ENCODE measurements at regions of chr14 and their contacts with region 1.

Region 1: DNA sequence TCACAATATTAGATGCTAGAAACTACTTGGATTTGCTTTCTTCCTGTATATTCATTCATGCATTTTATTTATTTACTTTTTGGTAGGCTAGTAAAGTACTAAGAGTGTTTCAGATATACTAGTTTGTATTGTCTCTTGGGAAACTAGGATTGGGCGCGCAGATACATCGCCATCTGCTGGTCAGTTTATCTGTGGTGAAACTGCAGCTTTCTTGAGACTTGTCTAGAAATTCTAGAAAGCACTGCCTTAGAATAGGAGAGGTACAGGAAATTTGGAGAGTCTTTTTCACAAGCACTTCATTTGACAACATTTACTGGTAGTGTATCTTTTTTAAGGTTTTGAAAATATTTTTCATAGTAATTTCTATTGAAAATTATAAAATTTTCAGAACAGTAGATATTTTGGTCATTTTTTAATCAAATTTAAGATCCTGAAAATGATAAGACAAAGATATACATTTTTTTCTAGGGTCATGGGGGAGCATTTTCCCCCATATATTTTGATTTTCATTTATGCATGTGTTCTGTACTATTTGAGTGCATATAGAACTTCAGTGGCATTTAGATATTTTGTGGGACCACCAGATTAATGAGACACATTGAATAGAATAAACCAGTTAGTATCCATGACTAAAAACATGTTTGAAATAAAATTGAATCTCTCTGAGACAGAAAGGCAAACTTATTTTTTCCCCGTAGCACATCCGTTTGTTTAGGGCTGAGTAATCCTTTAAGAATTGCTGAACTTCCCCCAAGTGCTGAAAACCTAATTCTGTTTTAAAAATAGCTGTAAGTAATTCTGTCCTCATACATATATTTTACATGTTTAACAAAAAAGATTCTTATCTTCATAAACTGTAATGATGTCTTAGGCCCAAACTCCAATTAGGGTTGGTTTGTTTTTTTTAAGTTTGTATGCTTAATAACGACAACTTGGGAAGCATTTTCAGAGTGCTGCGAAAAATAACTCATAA is 44.5 kb downstream of the SLC38A6 start:
- DNase-seq: peak in 7 of 9 donors; percentile 29 to 55 (median 43)
- ATAC-seq: peak; percentile 63
- H3K4me3 ChIP-seq: no peak overlapping the region
- H3K4me3 Mint-ChIP-seq: no peak overlapping the region
- H3K27ac ChIP-seq: no peak overlapping the region
- H3K27ac Mint-ChIP-seq: no peak overlapping the region
- H3K4me1 ChIP-seq: no peaks in the 10 kb centered on the region
- H3K4me1 Mint-ChIP-seq: no peaks in the 10 kb centered on the region
- H3K27me3 ChIP-seq: no peaks in the 10 kb centered on the region
- H3K27me3 Mint-ChIP-seq: no peaks in the 10 kb centered on the region

Region 2: DNA sequence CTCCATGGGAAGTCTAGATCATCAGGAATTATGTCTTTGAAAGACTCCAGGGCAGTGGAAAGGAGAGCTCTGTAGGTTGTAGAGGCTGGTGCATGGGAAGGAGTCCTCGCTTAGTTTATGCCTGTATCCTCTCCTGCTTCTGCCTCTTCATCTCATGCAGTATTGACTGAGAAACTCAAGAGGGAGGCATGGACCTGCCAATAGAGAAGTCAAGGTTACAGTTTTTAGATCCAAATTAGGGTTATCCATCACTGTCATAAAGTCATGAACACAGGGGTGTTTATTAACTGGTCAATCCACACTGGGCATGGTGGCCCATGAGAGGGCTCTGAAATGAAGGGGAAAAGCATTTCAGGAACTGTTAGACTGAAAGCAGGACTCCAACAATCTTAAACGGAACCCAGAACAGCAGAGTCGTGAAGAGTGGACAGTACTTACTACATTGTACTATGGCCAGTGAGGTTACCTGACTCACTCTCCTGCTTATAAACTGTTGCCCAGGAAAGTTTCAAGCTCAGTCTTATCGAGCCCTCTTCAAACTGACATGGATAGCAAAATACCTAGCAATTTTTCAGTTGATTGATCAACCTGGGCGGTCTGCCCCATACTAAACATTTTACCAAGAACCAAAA is 830.2 kb before region 1 on chr14:
- CTCF ChIA-PET with region 1: no interaction called
- POLR2A ChIA-PET with region 1: no interaction called
- intact Hi-C with region 1: loop called in 1 of 2 experiments (anchors 10 kb)
- DNase-seq: peak in 4 of 9 donors; percentile 13 to 31 (median 22)
- ATAC-seq: peak; percentile 60
- H3K4me3 ChIP-seq: no peak overlapping the region
- H3K4me3 Mint-ChIP-seq: no peak overlapping the region
- H3K27ac ChIP-seq: no peak overlapping the region
- H3K27ac Mint-ChIP-seq: no peak overlapping the region
- H3K4me1 ChIP-seq: no peaks in the 10 kb centered on the region
- H3K4me1 Mint-ChIP-seq: peaks cover 0 to 5% (median 0%) of the 10 kb centered on the region in 7 donors
- H3K27me3 ChIP-seq: no peaks in the 10 kb centered on the region
- H3K27me3 Mint-ChIP-seq: peaks cover 3 to 20% (median 10%) of the 10 kb centered on the region in 5 donors

Region 3: DNA sequence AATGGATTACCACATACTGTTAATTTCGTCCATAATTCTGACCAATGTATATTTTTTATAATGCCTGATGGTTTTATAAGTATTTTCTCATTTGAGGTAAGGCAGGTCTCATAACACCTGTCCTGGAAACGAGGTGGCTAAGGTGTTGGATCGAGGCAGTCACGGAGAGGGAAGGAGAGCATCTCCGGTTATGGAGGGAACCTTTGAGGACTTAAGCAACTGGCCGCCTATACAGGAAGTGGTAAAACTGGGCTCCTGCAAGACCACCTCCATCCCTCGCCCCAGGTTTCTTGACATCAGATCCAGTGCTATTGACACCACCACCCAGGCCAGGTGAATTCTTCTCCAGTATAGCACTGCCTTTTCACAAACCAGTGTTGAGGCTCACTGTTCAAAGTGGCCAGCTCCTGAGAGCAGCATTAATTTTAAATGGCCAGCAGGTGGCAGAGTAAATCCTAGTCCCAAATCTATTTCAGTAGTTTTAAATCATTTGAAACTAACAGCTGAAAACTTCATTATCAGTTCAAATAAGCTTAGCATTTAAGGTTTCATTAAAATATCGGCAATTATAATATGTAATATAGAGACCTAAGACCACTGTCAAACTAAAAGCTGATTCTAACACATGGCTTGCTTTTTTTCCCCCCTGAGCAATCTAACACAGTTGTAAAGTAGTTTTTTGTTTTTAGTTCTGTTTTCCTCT is 675.7 kb before region 1 on chr14:
- CTCF ChIA-PET with region 1: no interaction called
- POLR2A ChIA-PET with region 1: no interaction called
- intact Hi-C with region 1: loop called in 1 of 2 experiments (anchors 1 kb)
- DNase-seq: peak in 6 of 9 donors; percentile 2 to 37 (median 24)
- ATAC-seq: peak; percentile 54
- H3K4me3 ChIP-seq: no peak overlapping the region
- H3K4me3 Mint-ChIP-seq: no peak overlapping the region
- H3K27ac ChIP-seq: no peak overlapping the region
- H3K27ac Mint-ChIP-seq: no peak overlapping the region
- H3K4me1 ChIP-seq: no peaks in the 10 kb centered on the region
- H3K4me1 Mint-ChIP-seq: peaks cover 0 to 12% (median 3%) of the 10 kb centered on the region in 7 donors
- H3K27me3 ChIP-seq: peaks cover 0 to 3% of the 10 kb centered on the region in 2 donors
- H3K27me3 Mint-ChIP-seq: peaks cover 0 to 27% (median 12%) of the 10 kb centered on the region in 5 donors

Region 4: DNA sequence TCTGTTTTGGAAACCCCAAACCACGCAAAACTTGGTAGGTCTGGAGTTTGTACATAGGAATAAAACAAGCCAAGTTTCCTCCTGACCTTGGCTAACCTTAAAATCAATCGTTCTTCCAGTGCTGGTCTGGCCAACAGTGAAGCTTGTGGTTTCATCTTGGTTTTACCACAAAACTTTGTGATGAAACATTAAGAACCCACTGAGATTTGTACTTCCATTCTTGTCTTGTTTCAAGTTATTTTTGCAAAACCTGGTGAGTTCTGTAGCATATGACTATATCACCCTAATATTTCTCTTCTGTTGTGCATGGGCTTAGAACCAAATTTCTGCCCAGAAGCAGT is 402.6 kb before region 1 on chr14:
- CTCF ChIA-PET with region 1: interaction called, 21 read pairs
- POLR2A ChIA-PET with region 1: no interaction called
- intact Hi-C with region 1: loop called (anchors 1 kb)
- DNase-seq: no peak
- ATAC-seq: no peak
- H3K4me3 ChIP-seq: no peak overlapping the region
- H3K4me3 Mint-ChIP-seq: no peak overlapping the region
- H3K27ac ChIP-seq: no peak overlapping the region
- H3K27ac Mint-ChIP-seq: no peak overlapping the region
- H3K4me1 ChIP-seq: no peaks in the 10 kb centered on the region
- H3K4me1 Mint-ChIP-seq: peaks cover 0 to 2% (median 0%) of the 10 kb centered on the region in 7 donors
- H3K27me3 ChIP-seq: no peaks in the 10 kb centered on the region
- H3K27me3 Mint-ChIP-seq: peaks cover 25 to 47% (median 34%) of the 10 kb centered on the region in 5 donors

Region 5: DNA sequence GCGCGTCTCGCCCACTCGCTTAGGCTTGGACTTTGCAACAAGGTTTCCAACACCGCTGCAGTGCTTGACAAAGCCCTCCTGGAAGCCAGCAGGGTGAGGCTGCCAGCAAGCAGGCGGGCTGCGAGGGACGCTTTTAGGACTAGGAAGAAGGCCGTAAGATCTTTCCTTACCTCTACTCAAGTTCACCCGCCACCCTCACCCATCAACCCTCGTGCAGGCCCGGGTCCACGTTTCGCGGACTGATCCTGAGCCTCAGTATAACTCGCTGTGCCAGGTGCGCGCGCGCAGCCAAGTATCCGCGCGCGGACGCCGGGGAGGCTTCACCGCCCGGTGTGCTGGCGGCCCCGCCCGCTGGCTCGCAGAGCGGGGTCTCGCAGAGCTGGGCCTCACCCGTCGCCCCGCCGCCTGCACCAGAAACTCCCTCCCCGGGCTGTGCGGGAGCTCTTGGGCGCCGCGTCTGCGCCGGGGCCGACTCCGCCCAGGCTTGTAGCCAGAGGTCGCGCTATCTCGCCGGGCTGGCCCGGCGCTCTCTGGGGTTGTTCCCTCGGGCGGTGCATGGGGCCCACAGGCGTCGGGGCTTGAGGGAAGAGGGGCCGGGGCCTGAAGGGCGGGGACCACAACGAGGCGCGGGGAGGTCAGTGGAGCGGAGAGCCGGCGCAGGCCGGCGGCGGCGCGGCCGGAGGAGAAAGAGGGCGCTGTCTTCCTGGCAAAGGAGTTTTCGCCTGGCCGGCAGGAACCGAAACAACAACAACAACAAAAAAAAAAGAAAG is 368.7 kb before region 1 on chr14:
- CTCF ChIA-PET with region 1: interaction called, 3 read pairs
- POLR2A ChIA-PET with region 1: no interaction called
- intact Hi-C with region 1: loop called in 1 of 2 experiments (anchors 10 kb)
- DNase-seq: peak in 1 of 9 donors; percentile 54
- ATAC-seq: peak; percentile 49
- H3K4me3 ChIP-seq: peak overlapping the region; percentile 30
- H3K4me3 Mint-ChIP-seq: peak overlapping the region; percentile 66 to 84 (median 79)
- H3K27ac ChIP-seq: no peak overlapping the region
- H3K27ac Mint-ChIP-seq: no peak overlapping the region
- H3K4me1 ChIP-seq: peaks cover 12 to 17% of the 10 kb centered on the region in 2 donors
- H3K4me1 Mint-ChIP-seq: peaks cover 13 to 58% (median 50%) of the 10 kb centered on the region in 7 donors
- H3K27me3 ChIP-seq: peaks cover 14 to 38% of the 10 kb centered on the region in 2 donors
- H3K27me3 Mint-ChIP-seq: peaks cover 75 to 90% (median 82%) of the 10 kb centered on the region in 5 donors

Region 6: DNA sequence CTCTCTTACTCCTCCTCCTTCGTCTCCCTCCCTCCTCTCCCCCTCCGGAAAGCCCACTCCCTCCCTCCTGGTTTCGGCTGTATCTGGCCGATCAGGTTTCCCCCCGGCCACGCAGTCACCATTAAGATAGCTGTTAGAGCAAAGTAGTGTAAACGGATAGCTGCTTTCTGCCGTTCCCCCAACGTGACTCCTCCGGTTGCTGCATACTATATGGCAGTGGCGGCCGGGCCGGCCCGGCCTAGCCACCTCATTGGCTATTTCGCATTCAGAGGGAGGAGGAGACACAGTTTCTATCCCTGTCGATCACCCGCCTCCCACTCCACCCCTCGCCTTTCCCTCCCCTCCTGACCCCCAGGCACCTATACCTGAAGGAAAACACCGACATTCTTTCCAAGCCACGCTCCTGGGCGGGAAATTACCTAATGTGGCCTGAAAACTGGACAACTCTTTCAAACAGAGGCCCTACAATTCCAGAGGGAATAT is 301.4 kb before region 1 on chr14 and contains the start of gene SIX4:
- CTCF ChIA-PET with region 1: no interaction called
- POLR2A ChIA-PET with region 1: no interaction called
- intact Hi-C with region 1: loop called in 1 of 2 experiments (anchors 5 kb)
- DNase-seq: peak in 1 of 9 donors; percentile 2
- ATAC-seq: peak; percentile 33
- H3K4me3 ChIP-seq: peak within 1 kb of the TSS; percentile 61
- H3K4me3 Mint-ChIP-seq: peak within 1 kb of the TSS; percentile 85 to 96 (median 90)
- H3K27ac ChIP-seq: no peak within 1 kb of the TSS
- H3K27ac Mint-ChIP-seq: peak within 1 kb of the TSS in 1 of 9 donors; percentile 76
- H3K4me1 ChIP-seq: peaks cover 5 to 6% of the 10 kb centered on the region in 2 donors
- H3K4me1 Mint-ChIP-seq: peaks cover 0 to 28% (median 16%) of the 10 kb centered on the region in 7 donors
- H3K27me3 ChIP-seq: peaks cover 5 to 27% of the 10 kb centered on the region in 2 donors
- H3K27me3 Mint-ChIP-seq: peaks cover 74 to 80% (median 80%) of the 10 kb centered on the region in 5 donors
- total RNA-seq, gene SIX4: 0.46 TPM in 1 of 5 experiments, not detected in the others

Region 7: GRCh38 chr14:60989599-60989998 is 35.9 kb before region 1 on chr14:
- CTCF ChIA-PET with region 1: no interaction called
- POLR2A ChIA-PET with region 1: no interaction called
- intact Hi-C with region 1: no loop called
- DNase-seq: no peak
- ATAC-seq: no peak
- H3K4me3 ChIP-seq: no peak overlapping the region
- H3K4me3 Mint-ChIP-seq: no peak overlapping the region
- H3K27ac ChIP-seq: no peak overlapping the region
- H3K27ac Mint-ChIP-seq: no peak overlapping the region
- H3K4me1 ChIP-seq: no peaks in the 10 kb centered on the region
- H3K4me1 Mint-ChIP-seq: peaks cover 0 to 15% (median 12%) of the 10 kb centered on the region in 7 donors
- H3K27me3 ChIP-seq: no peaks in the 10 kb centered on the region
- H3K27me3 Mint-ChIP-seq: no peaks in the 10 kb centered on the region

Region 8: GRCh38 chr14:61252369-61253063 is 227.0 kb after region 1 on chr14:
- CTCF ChIA-PET with region 1: no interaction called
- POLR2A ChIA-PET with region 1: no interaction called
- intact Hi-C with region 1: loop called (anchors 1 kb)
- DNase-seq: peak; percentile 12 to 68 (median 50)
- ATAC-seq: peak; percentile 95
- H3K4me3 ChIP-seq: no peak overlapping the region
- H3K4me3 Mint-ChIP-seq: no peak overlapping the region
- H3K27ac ChIP-seq: no peak overlapping the region
- H3K27ac Mint-ChIP-seq: no peak overlapping the region
- H3K4me1 ChIP-seq: no peaks in the 10 kb centered on the region
- H3K4me1 Mint-ChIP-seq: peaks cover 0 to 26% (median 0%) of the 10 kb centered on the region in 7 donors
- H3K27me3 ChIP-seq: peaks cover 0 to 4% of the 10 kb centered on the region in 2 donors
- H3K27me3 Mint-ChIP-seq: peaks cover 11 to 25% (median 17%) of the 10 kb centered on the region in 5 donors